Activated T-helper 1 cell treated with anti-CD3 and anti-CD28 coated beads, Interleukin-12 subunit alpha, Interleukin-12 subunit beta, Interleukin-2, Interleukin-4 antibody, amounts not matched to agents 30 ng/mL and 10 ng/mL and 1 ng/mL, durations not matched to agents 14 hours and 24 hours and 36 hours (primary cell): ENCODE measurements at regions of chr7 and their contacts with region 1.

Region 1: DNA sequence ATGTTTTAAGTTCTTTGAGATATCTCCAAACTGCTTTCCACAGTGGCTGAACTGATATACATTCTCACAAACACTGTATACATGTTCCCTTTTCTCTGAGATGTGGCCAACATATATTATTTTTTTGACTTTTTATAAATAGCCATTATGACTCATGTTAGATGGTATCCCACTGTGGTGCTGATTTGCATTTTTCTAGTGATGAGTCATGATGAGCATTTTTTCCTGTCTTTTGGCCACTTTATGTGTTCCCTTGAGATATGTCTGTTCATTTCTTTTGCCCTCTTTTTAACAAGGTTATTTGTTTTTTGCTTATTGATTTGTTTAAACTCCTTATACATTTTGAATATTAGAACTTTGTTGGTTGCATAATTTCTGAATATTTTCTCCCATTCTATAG is 1055.1 kb downstream of the NXPH1 start:
- DNase-seq: no peak
- H3K4me3 Mint-ChIP-seq: no peak overlapping the region
- H3K27ac Mint-ChIP-seq: no peak overlapping the region
- H3K4me1 Mint-ChIP-seq: no peaks in the 10 kb centered on the region
- H3K27me3 Mint-ChIP-seq: no peaks in the 10 kb centered on the region

Region 2: DNA sequence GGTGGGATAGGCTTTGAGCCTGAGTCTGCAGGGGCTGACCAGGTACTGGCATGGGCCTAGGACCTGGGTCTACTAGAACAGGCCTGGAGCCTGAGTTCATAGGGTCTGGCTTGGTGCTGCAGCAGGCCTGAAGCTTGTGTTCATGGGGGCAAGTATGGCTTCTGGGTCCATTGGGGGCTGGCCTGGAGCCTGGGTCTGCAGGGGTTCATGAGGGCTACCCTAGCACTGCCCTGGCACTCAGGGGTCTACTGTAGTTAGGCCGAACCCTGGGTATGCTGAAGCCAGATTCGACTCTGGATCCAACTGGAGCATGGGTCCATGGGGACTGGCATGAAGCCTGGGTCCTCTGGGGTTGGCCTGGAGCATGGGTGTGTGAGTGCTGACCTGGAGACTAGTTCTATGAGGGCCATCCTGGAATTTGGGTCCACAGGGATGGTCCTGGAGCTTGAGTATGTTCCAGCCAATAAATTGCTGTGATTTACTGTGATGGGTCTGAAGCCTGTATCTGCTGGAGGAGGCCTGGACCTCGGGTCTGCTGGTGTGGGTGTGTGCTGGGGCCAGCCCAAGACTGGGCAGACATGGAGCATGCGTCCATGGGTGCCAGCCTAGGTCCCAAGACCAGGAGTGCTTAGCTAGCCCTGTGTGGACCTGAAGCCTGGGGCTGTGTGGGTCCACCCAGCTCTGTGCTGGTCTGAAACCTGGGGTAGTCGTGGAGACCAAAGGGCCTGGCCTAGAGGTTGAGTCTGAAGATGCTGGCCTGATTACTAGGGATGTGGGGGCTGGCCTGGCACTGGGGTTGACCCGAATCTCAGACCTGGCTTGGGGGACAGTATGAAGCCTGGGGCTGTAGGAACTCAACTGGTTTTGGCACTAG is 819.7 kb before region 1 on chr7:
- intact Hi-C with region 1: no loop called
- DNase-seq: no peak
- H3K4me3 Mint-ChIP-seq: no peak overlapping the region
- H3K27ac Mint-ChIP-seq: no peak overlapping the region
- H3K4me1 Mint-ChIP-seq: no peaks in the 10 kb centered on the region
- H3K27me3 Mint-ChIP-seq: no peaks in the 10 kb centered on the region

Region 3: GRCh38 chr7:9280088-9280487 is 208.5 kb before region 1 on chr7:
- intact Hi-C with region 1: loop called (anchors 5 kb)
- DNase-seq: no peak
- H3K4me3 Mint-ChIP-seq: no peak overlapping the region
- H3K27ac Mint-ChIP-seq: no peak overlapping the region
- H3K4me1 Mint-ChIP-seq: no peaks in the 10 kb centered on the region
- H3K27me3 Mint-ChIP-seq: no peaks in the 10 kb centered on the region

Region 4: GRCh38 chr7:9407816-9408215 is 80.7 kb before region 1 on chr7:
- intact Hi-C with region 1: no loop called
- DNase-seq: no peak
- H3K4me3 Mint-ChIP-seq: no peak overlapping the region
- H3K27ac Mint-ChIP-seq: no peak overlapping the region
- H3K4me1 Mint-ChIP-seq: no peaks in the 10 kb centered on the region
- H3K27me3 Mint-ChIP-seq: no peaks in the 10 kb centered on the region